IMR-90 (cell line): ENCODE measurements at regions of chr2 and their contacts with region 1.

Region 1: GRCh38 chr2:224576088-224576715 is 9.0 kb downstream of the CUL3 start:
- DNase-seq: no peak
- ATAC-seq: no peak
- H3K4me3 ChIP-seq: no peak overlapping the region
- H3K27ac ChIP-seq: no peak overlapping the region
- H3K4me1 ChIP-seq: peaks cover 13% of the 10 kb centered on the region
- H3K27me3 ChIP-seq: no peaks in the 10 kb centered on the region
- CTCF ChIP-seq: no peak
- POLR2A ChIP-seq: no peak
- RAD21 ChIP-seq: no peak

Region 2: DNA sequence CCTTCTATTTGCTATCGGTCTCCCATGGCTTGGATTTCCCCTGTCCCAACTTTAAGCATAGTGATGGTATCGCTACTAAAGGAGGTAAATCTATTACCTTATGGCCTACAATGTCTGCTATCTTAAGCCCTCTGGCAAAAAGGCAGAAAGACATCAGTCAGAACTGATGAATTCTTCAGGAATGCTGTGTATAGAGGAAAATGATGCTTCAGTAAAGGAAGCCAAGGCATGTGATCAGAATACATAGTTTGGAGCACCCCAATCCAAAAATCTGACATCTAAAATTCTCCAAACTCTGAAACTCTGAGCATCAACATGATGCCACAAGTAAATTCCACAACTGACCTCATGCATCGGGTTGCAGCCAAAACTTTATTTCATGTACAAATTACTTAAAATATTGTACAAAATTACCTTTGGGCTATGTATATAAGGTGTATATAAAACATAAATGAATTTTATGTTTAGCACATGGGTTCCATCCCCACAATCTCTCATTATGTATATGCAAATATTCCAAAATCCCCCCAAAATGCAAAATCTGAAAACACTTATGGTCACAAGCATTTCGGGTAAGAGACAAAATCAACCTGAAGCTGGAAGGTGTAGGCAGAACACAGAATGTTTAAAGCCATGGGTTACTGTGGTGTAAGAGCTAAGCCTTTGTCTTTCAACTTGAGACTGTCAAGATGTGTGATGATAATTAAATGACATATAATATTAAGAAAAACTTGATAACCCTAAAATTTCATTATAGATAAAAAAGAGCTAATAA is 57.2 kb before region 1 on chr2:
- CTCF ChIA-PET with region 1: no interaction called
- POLR2A ChIA-PET with region 1: no interaction called
- dilution Hi-C with region 1: no loop called
- in situ Hi-C with region 1: no loop called
- intact Hi-C with region 1: loop called (anchors 10 kb)
- DNase-seq: peak; percentile 84
- ATAC-seq: peak; percentile 79
- H3K4me3 ChIP-seq: no peak overlapping the region
- H3K27ac ChIP-seq: peak overlapping the region; percentile 52; the same call in 1 of the 2 replicates
- H3K4me1 ChIP-seq: peaks cover 15% of the 10 kb centered on the region
- H3K27me3 ChIP-seq: no peaks in the 10 kb centered on the region
- CTCF ChIP-seq: no peak
- POLR2A ChIP-seq: no peak
- RAD21 ChIP-seq: no peak